ENCODE measurements at regions of chr20 and their contacts with region 1.

Region 1: GRCh38 chr20:43996240-43996930 is 81.7 kb downstream of the TOX2 start:
- DNase-seq: peak; percentile 62
- H3K4me3 ChIP-seq: no peak overlapping the region
- H3K27ac ChIP-seq: no peak overlapping the region
- H3K4me1 ChIP-seq: no peaks in the 10 kb centered on the region
- H3K27me3 ChIP-seq: no peaks in the 10 kb centered on the region
- CTCF ChIP-seq: no peak
- POLR2A ChIP-seq: no peak

Region 2: GRCh38 chr20:43983359-43983758 is 13.0 kb before region 1 on chr20:
- CTCF ChIA-PET with region 1: interaction called, 11 read pairs
- POLR2A ChIA-PET with region 1: interaction called, 3 read pairs
- dilution Hi-C with region 1: no loop called
- intact Hi-C with region 1: no loop called
- DNase-seq: no peak
- H3K4me3 ChIP-seq: no peak overlapping the region
- H3K27ac ChIP-seq: peak overlapping the region; percentile 71
- H3K4me1 ChIP-seq: peaks cover 23% of the 10 kb centered on the region
- H3K27me3 ChIP-seq: no peaks in the 10 kb centered on the region
- CTCF ChIP-seq: peak; percentile 22 to 33
- POLR2A ChIP-seq: no peak

Measured in endothelial cell of umbilical vein (primary cell).